Sigmoid colon (tissue), 7 donors: ENCODE measurements at regions of chr12 and their contacts with region 1.

Region 1: DNA sequence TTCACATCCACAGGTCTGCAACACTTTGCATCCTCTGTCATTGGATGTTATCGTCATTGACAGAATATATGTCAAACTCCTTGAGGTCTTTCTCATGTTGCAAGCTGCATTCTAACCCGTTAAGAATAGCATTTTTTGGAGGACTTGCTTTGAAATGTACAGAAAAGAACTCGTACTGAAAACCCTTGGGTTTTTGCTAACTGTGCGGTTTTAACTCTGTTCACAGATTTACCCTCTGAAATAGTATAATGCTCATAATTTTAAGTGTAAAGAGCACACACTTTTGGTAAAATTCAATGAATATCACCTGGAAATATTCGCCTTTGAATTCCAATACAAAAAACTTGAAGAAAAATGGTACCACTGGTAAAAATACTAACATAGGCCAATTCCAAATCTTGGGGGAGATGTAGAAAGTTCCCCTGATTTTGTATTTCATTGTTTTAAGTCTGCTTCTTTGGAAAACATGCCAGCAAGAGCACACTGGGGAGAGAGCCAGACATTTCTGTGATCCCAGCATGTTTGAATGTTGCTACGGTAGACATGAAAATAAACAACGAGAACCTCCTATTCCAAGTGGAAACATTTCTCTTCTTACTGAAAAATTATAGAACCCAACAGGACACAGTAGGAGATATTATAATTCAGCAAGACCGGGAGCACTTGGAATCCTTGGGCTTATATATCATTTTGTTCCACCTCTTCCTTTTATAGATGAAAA is 446.0 kb downstream of the AEBP2 start:
- DNase-seq: no peak
- H3K4me3 ChIP-seq: no peak overlapping the region
- H3K27ac ChIP-seq: peak overlapping the region; percentile 61 to 75 (median 69)
- H3K4me1 ChIP-seq: peaks cover 0 to 66% (median 51%) of the 10 kb centered on the region in 4 donors
- H3K27me3 ChIP-seq: no peaks in the 10 kb centered on the region
- CTCF ChIP-seq: no peak
- EP300 ChIP-seq: no peak
- POLR2A ChIP-seq: no peak

Region 2: DNA sequence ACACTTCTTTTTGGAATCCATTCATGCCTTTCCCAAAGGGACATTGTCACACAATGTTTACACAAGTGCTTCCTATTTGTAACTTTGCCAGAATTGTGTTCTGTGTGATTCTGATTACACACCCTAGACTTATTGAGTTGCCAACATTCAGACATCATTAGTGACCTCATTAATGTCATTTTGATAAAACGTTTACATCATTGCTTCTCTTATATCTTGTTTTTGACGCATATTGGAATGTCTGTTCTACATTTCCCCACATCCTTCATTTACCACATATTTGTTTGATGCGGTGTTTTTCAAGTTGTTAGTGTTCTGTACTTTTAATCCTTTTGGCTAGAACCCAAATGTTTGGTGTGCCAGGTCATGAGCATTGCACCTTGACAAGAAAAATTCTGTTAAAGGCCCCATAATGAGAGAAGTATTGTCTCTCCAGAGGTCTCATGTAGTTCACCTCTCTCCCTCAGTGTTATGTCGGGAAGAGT is 140.5 kb before region 1 on chr12:
- intact Hi-C with region 1: loop called (anchors 10 kb)
- DNase-seq: no peak
- H3K4me3 ChIP-seq: no peak overlapping the region
- H3K27ac ChIP-seq: peak overlapping the region in 1 of 4 donors; percentile 17
- H3K4me1 ChIP-seq: peaks cover 0 to 42% (median 17%) of the 10 kb centered on the region in 4 donors
- H3K27me3 ChIP-seq: no peaks in the 10 kb centered on the region
- CTCF ChIP-seq: no peak
- EP300 ChIP-seq: peak in 1 of 4 donors; percentile 43
- POLR2A ChIP-seq: no peak

Region 3: DNA sequence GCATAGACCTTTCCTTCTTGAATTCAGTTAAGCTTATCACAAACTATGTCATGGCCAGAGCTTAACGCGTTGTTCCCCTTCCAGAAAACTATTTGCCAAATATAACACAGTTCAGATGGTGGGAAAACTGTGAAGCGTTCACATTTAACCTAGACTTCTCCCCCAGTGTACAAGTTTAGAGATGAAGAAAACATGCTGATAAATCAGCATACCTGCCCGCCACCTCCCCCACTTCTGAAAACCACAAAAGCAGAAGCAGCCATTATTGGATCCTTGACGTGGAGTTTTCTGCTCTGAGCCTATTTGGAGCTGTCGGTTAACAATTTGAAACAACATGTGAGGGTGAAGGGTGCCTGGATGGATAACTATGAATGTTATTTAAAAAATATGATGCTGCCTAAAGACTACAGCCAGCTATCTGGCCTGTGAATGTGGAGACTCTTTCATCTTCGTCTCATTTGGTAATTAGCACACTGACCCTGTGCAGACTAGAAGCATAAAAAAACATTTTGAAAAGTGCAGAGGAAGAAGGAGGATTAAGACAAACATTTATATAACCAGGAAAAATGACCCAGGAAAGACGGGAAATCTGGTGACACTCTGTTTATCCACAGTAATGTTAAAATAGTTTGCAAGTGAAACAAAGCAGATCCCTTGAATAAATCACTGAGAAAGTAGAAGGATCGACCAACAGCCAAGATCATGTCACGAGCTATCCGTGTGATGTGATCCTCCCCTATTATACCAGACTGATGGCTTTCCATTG is 37.8 kb before region 1 on chr12:
- intact Hi-C with region 1: loop called (anchors 5 kb)
- DNase-seq: no peak
- H3K4me3 ChIP-seq: peak overlapping the region in 1 of 4 donors; percentile 9
- H3K27ac ChIP-seq: peak overlapping the region; percentile 48 to 81 (median 74)
- H3K4me1 ChIP-seq: peaks cover 0 to 39% (median 21%) of the 10 kb centered on the region in 4 donors
- H3K27me3 ChIP-seq: no peaks in the 10 kb centered on the region
- CTCF ChIP-seq: no peak
- EP300 ChIP-seq: peak; percentile 72 to 88 (median 80)
- POLR2A ChIP-seq: no peak